ENCODE measurements at regions of chr20 and their contacts with region 1.

Region 1: GRCh38 chr20:45971675-45972499 is at the start of gene ZNF335:
- DNase-seq: peak; percentile 90 to 98 (median 94)
- ATAC-seq: peak; percentile 83
- H3K4me3 ChIP-seq: peak within 1 kb of the TSS; percentile 100
- H3K4me3 Mint-ChIP-seq: peak within 1 kb of the TSS; percentile 90
- H3K27ac ChIP-seq: peak within 1 kb of the TSS; percentile 100
- H3K27ac Mint-ChIP-seq: peak within 1 kb of the TSS; percentile 100
- H3K4me1 ChIP-seq: peaks cover 27% of the 10 kb centered on the region
- H3K4me1 Mint-ChIP-seq: peaks cover 24% of the 10 kb centered on the region
- H3K27me3 ChIP-seq: no peaks in the 10 kb centered on the region
- H3K27me3 Mint-ChIP-seq: no peaks in the 10 kb centered on the region
- CTCF ChIP-seq: no peak
- total RNA-seq, gene ZNF335: 90.9 to 96.1 TPM

Region 2: DNA sequence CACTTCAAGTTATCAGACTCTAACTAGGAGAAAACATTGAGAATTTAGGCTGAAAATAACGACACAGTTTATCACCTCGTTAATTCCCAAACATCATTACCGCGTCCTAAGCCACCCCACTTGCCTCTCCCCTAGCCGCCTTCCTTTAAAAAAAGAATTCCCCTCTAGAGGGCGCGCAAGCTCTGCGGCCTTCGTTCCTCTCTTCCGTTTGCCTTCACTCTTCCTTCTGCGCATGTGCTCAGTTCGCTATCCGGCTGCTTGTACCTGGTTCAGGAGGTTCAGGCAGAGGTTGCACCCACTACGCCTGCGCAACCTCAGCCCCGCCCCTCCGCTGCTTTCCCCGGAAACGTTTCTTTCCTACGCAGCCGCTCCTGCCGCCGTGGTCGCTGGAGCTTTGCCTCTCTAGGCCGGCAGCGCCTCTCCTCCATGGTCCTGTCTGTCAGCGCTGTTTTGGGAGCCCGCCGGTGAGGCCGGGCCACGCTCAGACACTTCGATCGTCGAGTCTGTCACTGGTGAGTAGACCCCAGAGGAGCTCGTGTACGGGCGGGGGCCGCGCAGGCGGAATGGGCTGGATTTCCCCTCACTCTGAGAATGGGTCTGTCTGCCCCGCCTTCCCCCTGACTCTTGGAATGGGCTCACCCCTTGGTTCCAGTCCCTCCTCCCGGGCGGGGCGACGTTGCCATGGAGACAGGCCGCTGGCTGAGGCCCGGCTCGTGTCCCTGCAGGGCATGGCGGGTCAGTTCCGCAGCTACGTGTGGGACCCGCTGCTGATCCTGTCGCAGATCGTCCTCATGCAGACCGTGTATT is 608.9 kb before region 1 on chr20 and contains the start of gene SYS1:
- CTCF ChIA-PET with region 1: no interaction called
- POLR2A ChIA-PET with region 1: no interaction called
- intact Hi-C with region 1: loop called in 1 of 2 experiments (anchors 10 kb)
- DNase-seq: peak; percentile 97 to 99 (median 99)
- ATAC-seq: peak; percentile 86
- H3K4me3 ChIP-seq: peak within 1 kb of the TSS; percentile 91 to 99
- H3K4me3 Mint-ChIP-seq: peak within 1 kb of the TSS; percentile 100
- H3K27ac ChIP-seq: peak within 1 kb of the TSS; percentile 92 to 100
- H3K27ac Mint-ChIP-seq: peak within 1 kb of the TSS; percentile 100
- H3K4me1 ChIP-seq: peaks cover 33% of the 10 kb centered on the region
- H3K4me1 Mint-ChIP-seq: peaks cover 49% of the 10 kb centered on the region
- H3K27me3 ChIP-seq: no peaks in the 10 kb centered on the region
- H3K27me3 Mint-ChIP-seq: no peaks in the 10 kb centered on the region
- CTCF ChIP-seq: peak; percentile 89
- total RNA-seq, gene SYS1: 111 to 116 TPM

Region 3: GRCh38 chr20:45857114-45857881 is 114.6 kb before region 1 on chr20 and contains the starts of genes ACOT8 and ZSWIM3:
- CTCF ChIA-PET with region 1: interaction called, 3 read pairs
- POLR2A ChIA-PET with region 1: interaction called, 6 read pairs
- intact Hi-C with region 1: loop called (anchors 1 kb)
- DNase-seq: peak; percentile 79 to 100 (median 91)
- ATAC-seq: peak; percentile 96
- H3K4me3 ChIP-seq: peak within 1 kb of the TSS; percentile 82 to 87
- H3K4me3 Mint-ChIP-seq: peak within 1 kb of the TSS; percentile 96
- H3K27ac ChIP-seq: peak within 1 kb of the TSS; percentile 80 to 93
- H3K27ac Mint-ChIP-seq: peak within 1 kb of the TSS; percentile 99
- H3K4me1 ChIP-seq: peaks cover 29% of the 10 kb centered on the region
- H3K4me1 Mint-ChIP-seq: peaks cover 52% of the 10 kb centered on the region
- H3K27me3 ChIP-seq: no peaks in the 10 kb centered on the region
- H3K27me3 Mint-ChIP-seq: no peaks in the 10 kb centered on the region
- CTCF ChIP-seq: no peak
- total RNA-seq, gene ACOT8: 14.5 to 17.0 TPM
- total RNA-seq, gene ZSWIM3: 0.30 to 0.58 TPM

Region 4: GRCh38 chr20:45934586-45935415 is 37.1 kb before region 1 on chr20 and contains the start of gene PCIF1:
- CTCF ChIA-PET with region 1: interaction called, 11 read pairs
- POLR2A ChIA-PET with region 1: interaction called, 99 read pairs
- intact Hi-C with region 1: loop called (anchors 1 kb)
- DNase-seq: peak; percentile 97 to 100 (median 98)
- ATAC-seq: peak; percentile 79
- H3K4me3 ChIP-seq: peak within 1 kb of the TSS; percentile 95 to 99
- H3K4me3 Mint-ChIP-seq: peak within 1 kb of the TSS; percentile 83
- H3K27ac ChIP-seq: peak within 1 kb of the TSS; percentile 94 to 98
- H3K27ac Mint-ChIP-seq: peak within 1 kb of the TSS; percentile 98
- H3K4me1 ChIP-seq: peaks cover 11% of the 10 kb centered on the region
- H3K4me1 Mint-ChIP-seq: peaks cover 29% of the 10 kb centered on the region
- H3K27me3 ChIP-seq: no peaks in the 10 kb centered on the region
- H3K27me3 Mint-ChIP-seq: no peaks in the 10 kb centered on the region
- CTCF ChIP-seq: no peak
- total RNA-seq, gene PCIF1: 112 to 118 TPM

Region 5: GRCh38 chr20:46004889-46005473 is 33.1 kb after region 1 on chr20:
- CTCF ChIA-PET with region 1: interaction called, 10 read pairs
- POLR2A ChIA-PET with region 1: interaction called, 13 read pairs
- intact Hi-C with region 1: loop called in 1 of 2 experiments (anchors 5 kb)
- DNase-seq: peak in 5 of 9 experiments; percentile 10 to 80 (median 62)
- ATAC-seq: peak; percentile 68
- H3K4me3 ChIP-seq: peak overlapping the region; percentile 6 to 18
- H3K4me3 Mint-ChIP-seq: peak overlapping the region; percentile 77
- H3K27ac ChIP-seq: no peak overlapping the region
- H3K27ac Mint-ChIP-seq: peak overlapping the region; percentile 85
- H3K4me1 ChIP-seq: peaks cover 70% of the 10 kb centered on the region
- H3K4me1 Mint-ChIP-seq: peaks cover 79% of the 10 kb centered on the region
- H3K27me3 ChIP-seq: peaks cover 8% of the 10 kb centered on the region in 2 experiments
- H3K27me3 Mint-ChIP-seq: peaks cover 31% of the 10 kb centered on the region
- CTCF ChIP-seq: no peak

Region 6: GRCh38 chr20:46363800-46364634 is 392.1 kb after region 1 on chr20:
- CTCF ChIA-PET with region 1: no interaction called
- POLR2A ChIA-PET with region 1: no interaction called
- intact Hi-C with region 1: loop called (anchors 1 to 5 kb)
- DNase-seq: peak; percentile 70 to 94 (median 86)
- ATAC-seq: peak; percentile 67
- H3K4me3 ChIP-seq: peak overlapping the region; percentile 89 to 92
- H3K4me3 Mint-ChIP-seq: peak overlapping the region; percentile 90
- H3K27ac ChIP-seq: peak overlapping the region; percentile 97 to 98
- H3K27ac Mint-ChIP-seq: peak overlapping the region; percentile 97
- H3K4me1 ChIP-seq: peaks cover 70% of the 10 kb centered on the region
- H3K4me1 Mint-ChIP-seq: peaks cover 83% of the 10 kb centered on the region
- H3K27me3 ChIP-seq: no peaks in the 10 kb centered on the region
- H3K27me3 Mint-ChIP-seq: no peaks in the 10 kb centered on the region
- CTCF ChIP-seq: no peak